ENCODE measurements at regions of chr3 and their contacts with region 1.

Region 1: DNA sequence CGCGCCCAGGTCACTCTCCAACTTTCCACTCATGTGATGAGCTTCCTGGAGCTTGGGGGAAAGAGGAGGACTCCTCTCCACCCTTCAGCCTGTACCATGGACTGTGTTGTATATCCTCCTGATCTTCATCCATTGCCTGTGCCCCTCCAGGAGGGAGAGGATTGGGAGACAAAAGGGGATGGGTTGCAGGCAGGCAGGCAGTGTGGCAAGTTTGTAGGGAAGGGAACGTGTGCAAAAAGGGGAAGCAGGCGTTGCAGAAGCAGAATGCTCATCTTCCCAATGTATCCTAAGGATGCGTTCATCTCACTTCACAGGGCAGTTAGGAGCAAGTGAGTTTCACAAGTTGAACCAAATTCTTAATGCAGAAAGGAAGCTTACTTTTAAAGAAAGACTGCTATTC is 28.1 kb upstream of the GHSR start:
- DNase-seq: no peak
- ATAC-seq: peak; percentile 17 to 51 (median 30)
- H3K4me3 ChIP-seq: peak overlapping the region in 8 of 12 donors; percentile 17 to 63 (median 52)
- H3K27ac ChIP-seq: peak overlapping the region in 3 of 12 donors; percentile 27 to 67 (median 59)
- H3K4me1 ChIP-seq: peaks cover 0 to 20% (median 0%) of the 10 kb centered on the region in 12 donors
- H3K27me3 ChIP-seq: no peaks in the 10 kb centered on the region
- CTCF ChIP-seq: no peak
- POLR2A ChIP-seq: no peak

Region 2: DNA sequence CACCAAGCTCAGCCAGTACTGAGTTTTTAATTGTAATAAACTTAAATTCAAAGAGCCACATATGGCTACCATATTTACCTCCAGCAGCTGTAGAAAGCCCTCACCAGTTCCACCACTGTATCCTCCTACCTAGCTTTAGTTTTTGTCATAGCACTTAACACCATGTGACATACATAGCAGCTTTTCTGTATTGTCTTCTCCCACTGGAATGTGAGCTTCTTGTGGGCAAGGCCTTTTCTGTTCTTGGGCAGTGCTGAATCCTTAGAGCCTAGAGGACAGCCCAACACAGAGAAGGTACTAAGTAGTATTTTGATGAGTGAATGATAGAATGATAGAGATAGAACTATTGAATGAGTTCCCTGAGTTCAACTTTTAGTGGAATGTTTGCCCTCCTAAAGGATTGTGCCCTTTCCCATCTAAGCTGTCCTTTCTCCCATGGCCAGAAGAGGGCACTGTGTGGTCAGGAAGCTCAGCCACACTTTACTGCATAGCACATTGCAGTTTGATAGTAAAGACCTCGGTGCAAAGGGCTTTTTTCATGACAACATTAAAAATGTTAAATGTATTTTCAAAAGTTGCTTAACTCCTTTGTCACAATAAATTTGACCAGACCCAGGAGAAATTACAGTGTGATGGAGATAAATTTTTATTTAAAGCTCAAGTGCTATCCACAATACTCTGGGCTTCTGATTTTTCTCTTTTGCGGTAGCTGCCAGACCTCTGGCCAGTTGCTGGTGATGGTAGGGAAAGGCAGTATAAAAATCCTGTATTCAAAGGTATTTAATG is 143.9 kb before region 1 on chr3:
- intact Hi-C with region 1: loop called in 1 of 10 experiments (anchors 5 kb)
- DNase-seq: peak in 4 of 5 donors; percentile 50 to 63 (median 54)
- ATAC-seq: peak; percentile 76 to 89 (median 86)
- H3K4me3 ChIP-seq: no peak overlapping the region
- H3K27ac ChIP-seq: peak overlapping the region in 8 of 12 donors; percentile 3 to 63 (median 34)
- H3K4me1 ChIP-seq: peaks cover 0 to 11% (median 5%) of the 10 kb centered on the region in 12 donors
- H3K27me3 ChIP-seq: no peaks in the 10 kb centered on the region
- CTCF ChIP-seq: peak; percentile 82 to 95 (median 90)
- POLR2A ChIP-seq: no peak

Region 3: DNA sequence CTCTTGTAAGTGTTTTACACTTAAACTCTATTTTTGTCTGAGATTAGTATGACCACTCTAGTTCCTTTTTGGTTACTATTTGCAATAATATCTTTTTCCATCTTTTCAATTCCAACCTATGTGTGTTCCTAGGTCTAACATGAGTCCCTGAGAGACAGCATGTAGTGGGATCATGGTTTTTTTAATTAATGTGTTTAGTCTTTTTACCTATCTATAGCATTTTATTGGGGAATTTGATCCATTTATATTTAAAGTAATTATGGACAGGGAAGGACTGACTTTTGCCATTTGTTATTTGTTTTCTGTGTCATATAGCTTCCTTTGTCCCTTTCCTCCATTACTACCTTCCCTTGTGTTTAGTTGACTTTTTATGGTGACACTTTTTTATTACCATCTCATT is 25.2 kb after region 1 on chr3:
- intact Hi-C with region 1: no loop called
- DNase-seq: no peak
- ATAC-seq: no peak
- H3K4me3 ChIP-seq: no peak overlapping the region
- H3K27ac ChIP-seq: no peak overlapping the region
- H3K4me1 ChIP-seq: no peaks in the 10 kb centered on the region
- H3K27me3 ChIP-seq: no peaks in the 10 kb centered on the region
- CTCF ChIP-seq: no peak
- POLR2A ChIP-seq: no peak

Measured in heart left ventricle (tissue), 16 donors.